ENCODE measurements at regions of chr1 and their contacts with region 1.

Region 1: GRCh38 chr1:167721617-167722151 is at the start of gene MPZL1:
- DNase-seq: peak; percentile 95 to 99 (median 98)

Region 2: DNA sequence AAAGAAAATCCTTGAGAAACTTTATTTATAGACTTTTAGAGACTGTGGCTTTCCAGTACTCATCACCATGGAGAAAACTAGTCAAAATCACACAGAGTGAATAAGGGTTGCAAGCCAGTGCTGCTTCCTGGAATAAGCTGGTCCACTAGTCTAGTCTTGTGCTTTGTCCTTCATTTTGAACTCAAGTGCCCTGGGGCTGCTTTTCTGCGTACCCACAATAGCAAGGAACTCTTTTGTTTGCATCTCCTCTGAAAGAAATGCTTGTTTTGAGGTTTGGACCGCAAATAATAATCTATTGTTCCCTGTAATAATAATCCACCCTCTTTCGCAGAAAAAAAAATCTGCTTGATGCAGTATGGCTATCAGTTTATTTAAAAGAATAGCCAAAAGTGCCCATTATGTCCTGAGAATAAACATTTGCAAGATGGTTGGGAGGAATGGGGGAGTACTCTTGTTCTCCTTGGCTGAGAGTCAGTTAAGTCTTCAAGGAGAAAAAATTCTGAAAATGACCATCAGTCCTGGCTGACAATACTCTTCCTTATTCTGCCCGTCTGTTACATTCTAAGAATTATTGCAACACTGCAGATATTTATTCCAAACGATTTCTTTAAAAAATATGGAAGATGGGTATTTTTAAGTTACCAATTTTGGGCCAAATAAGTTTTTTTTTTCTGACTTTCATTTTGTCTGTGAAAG is 42.0 kb after region 1 on chr1:
- intact Hi-C with region 1: loop called (anchors 2 kb)
- DNase-seq: peak in 6 of 10 donors; percentile 24 to 79 (median 36)

Region 3: GRCh38 chr1:167803358-167804207 is 81.9 kb after region 1 on chr1:
- intact Hi-C with region 1: loop called (anchors 1 kb)
- DNase-seq: peak; percentile 66 to 97 (median 88)

Region 4: DNA sequence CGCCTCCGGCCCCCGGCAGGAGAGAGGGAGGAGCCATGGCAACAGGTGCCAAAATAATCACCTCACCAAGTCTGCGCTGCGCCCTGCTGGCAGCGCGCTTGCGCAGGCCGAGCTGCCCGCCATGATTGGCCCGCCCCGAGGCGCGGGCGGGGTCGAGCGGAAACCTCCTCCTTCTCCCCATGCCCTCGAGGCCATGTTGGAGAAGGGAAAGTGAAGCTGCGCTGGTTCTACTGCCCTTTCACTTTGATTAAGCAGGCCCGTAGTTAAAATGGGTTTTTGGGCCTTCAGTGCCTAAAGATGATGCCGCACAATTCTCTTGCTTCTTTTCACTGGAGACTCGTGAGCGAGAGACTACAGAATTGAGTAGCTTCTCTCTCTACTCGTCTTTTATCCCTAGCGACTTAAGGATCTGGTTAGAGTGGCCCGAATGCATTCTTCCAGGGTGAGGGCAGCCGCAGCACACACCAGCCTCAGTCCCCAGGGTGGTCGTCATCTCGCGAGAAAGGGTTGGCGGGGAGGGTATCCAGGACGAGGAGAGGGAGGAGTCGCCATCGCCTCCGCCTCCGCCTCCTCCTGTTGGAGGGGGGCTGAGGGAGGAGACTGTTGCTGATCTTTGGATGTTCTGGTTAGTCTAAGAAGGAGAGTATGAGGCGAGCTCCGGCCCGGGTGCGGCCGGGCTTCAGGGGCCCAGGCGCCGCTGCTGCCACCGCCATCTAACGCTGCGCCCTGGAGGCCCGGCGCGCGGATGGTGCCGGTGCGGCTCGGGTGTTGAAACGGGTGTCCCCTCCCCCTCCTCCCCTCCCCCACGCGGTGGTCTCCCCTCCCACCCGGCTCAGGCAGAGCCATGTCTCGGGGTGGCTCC is 214.6 kb after region 1 on chr1 and contains the start of gene DCAF6:
- intact Hi-C with region 1: loop called (anchors 5 kb)
- DNase-seq: peak; percentile 90 to 99 (median 94)

Measured in posterior cingulate gyrus (tissue), 11 donors.